Vagina (tissue), 2 donors: ENCODE measurements at regions of chr4 and their contacts with region 1.

Region 1: DNA sequence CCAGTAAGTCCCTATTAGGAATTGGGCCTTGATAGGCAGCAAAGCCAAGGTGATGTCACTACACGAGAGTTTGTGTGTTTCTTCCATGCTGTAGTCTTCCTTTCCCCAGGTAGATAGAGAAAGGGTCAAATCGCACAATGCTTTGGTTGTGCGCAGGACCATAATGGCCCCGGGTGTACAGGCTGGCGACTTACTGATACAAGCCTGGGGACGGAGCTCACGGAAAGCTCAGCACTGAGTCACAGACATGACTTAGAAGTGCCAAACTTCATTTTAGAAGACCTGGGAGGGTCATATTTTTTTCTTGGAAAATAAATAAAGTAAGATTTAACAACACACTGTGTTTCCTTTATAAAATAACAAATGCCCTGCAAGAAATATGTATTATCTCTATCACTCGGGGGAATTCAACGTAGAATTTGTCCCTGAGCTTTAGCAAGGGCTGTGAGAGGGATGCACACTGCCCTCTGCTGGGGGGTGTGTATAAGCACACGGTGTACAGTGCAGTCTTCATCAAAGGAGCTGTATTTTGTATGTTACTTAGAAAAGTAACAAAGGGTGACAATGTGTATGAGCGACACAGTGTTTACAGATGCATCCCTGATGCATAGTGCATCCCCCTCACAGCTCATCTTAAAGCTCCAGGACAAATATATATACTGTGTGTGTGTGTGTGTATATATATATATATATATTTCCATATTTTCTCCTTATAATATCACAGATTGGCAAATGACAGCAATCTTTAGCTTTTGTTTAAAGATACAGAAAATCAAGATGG is 254.5 kb upstream of the VEGFC start:
- DNase-seq: no peak
- H3K4me3 ChIP-seq: no peak overlapping the region
- H3K27ac ChIP-seq: no peak overlapping the region
- H3K4me1 ChIP-seq: no peaks in the 10 kb centered on the region
- H3K27me3 ChIP-seq: no peaks in the 10 kb centered on the region
- CTCF ChIP-seq: peak; percentile 22 to 62 (median 51)
- POLR2A ChIP-seq: no peak

Region 2: GRCh38 chr4:176377780-176378179 is 669.5 kb before region 1 on chr4:
- intact Hi-C with region 1: loop called (anchors 10 kb)
- DNase-seq: no peak
- H3K4me3 ChIP-seq: no peak overlapping the region
- H3K27ac ChIP-seq: no peak overlapping the region
- H3K4me1 ChIP-seq: no peaks in the 10 kb centered on the region
- H3K27me3 ChIP-seq: no peaks in the 10 kb centered on the region
- CTCF ChIP-seq: peak in 1 of 3 experiments; percentile 12
- POLR2A ChIP-seq: no peak

Region 3: GRCh38 chr4:176563591-176563990 is 483.7 kb before region 1 on chr4:
- intact Hi-C with region 1: loop called (anchors 10 kb)
- DNase-seq: no peak
- H3K4me3 ChIP-seq: no peak overlapping the region
- H3K27ac ChIP-seq: no peak overlapping the region
- H3K4me1 ChIP-seq: no peaks in the 10 kb centered on the region
- H3K27me3 ChIP-seq: no peaks in the 10 kb centered on the region
- CTCF ChIP-seq: no peak
- POLR2A ChIP-seq: no peak

Region 4: GRCh38 chr4:177441803-177442622 is 394.8 kb after region 1 on chr4 and contains the start of gene AGA:
- intact Hi-C with region 1: no loop called
- DNase-seq: peak in 1 of 2 donors; percentile 95
- H3K4me3 ChIP-seq: peak within 1 kb of the TSS; percentile 63 to 64
- H3K27ac ChIP-seq: peak within 1 kb of the TSS; percentile 94
- H3K4me1 ChIP-seq: peaks cover 17% of the 10 kb centered on the region
- H3K27me3 ChIP-seq: no peaks in the 10 kb centered on the region
- CTCF ChIP-seq: no peak
- POLR2A ChIP-seq: no peak
- total RNA-seq, gene AGA: 26.3 TPM